Activated CD4-positive, alpha-beta T cell treated with anti-CD3 and anti-CD28 coated beads, Interleukin-2, amount 10 ng/mL, durations not matched to agents 24 days and 14 days (primary cell): ENCODE measurements at regions of chr12 and their contacts with region 1.

Region 1: GRCh38 chr12:19547271-19547671 is 108.0 kb downstream of the AEBP2 start:
- DNase-seq: no peak
- H3K4me3 Mint-ChIP-seq: no peak overlapping the region
- H3K27ac Mint-ChIP-seq: no peak overlapping the region
- H3K4me1 Mint-ChIP-seq: peaks cover 4% of the 10 kb centered on the region
- H3K27me3 Mint-ChIP-seq: no peaks in the 10 kb centered on the region

Region 2: GRCh38 chr12:19482551-19483109 is 64.6 kb before region 1 on chr12:
- intact Hi-C with region 1: loop called (anchors 1 kb)
- DNase-seq: peak; percentile 72
- H3K4me3 Mint-ChIP-seq: peak overlapping the region; percentile 39
- H3K27ac Mint-ChIP-seq: peak overlapping the region; percentile 74
- H3K4me1 Mint-ChIP-seq: peaks cover 44% of the 10 kb centered on the region
- H3K27me3 Mint-ChIP-seq: no peaks in the 10 kb centered on the region